ENCODE measurements at regions of chr18 and their contacts with region 1.

Region 1: DNA sequence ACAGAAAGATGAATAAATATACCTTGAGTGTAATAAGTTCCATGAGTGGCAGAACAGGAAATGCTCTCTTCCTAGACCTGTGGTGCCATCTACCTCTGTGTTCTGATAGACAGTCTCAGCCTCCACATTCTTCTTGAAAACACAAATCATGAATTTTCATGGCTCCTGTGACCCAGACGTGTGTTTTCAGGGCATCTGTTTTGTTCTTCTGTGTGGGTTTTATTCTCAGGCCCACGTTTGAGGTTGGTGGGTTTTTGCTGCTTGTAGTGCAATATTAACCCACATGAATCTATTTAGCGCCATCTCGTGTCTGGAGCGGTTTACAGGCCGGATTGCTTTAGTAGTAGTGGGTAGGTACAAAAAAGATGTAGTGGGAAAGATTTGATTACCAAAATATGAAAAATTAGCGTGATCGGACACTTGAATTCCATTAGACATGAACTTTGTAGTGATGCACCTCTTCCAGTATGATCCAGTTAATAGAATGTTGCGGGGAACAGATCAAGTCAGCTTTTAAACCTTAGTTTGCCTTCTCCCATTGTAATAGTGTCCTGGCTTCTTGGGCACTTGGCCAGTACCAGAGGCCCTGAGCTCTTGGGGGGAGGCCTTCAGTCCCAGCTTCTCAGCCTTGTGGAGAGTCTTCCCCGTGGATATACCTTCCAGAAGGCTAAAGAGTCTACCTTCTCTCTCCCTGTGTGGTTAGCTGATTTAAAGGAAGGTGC is 256.5 kb downstream of the TPGS2 start:
- DNase-seq: peak; percentile 69
- H3K4me3 Mint-ChIP-seq: no peak overlapping the region
- H3K27ac Mint-ChIP-seq: no peak overlapping the region
- H3K4me1 Mint-ChIP-seq: peaks cover 9% of the 10 kb centered on the region
- H3K27me3 Mint-ChIP-seq: no peaks in the 10 kb centered on the region
- CTCF ChIP-seq: peak; percentile 70

Region 2: GRCh38 chr18:36284671-36285295 is 287.5 kb before region 1 on chr18:
- CTCF ChIA-PET with region 1: interaction called, 21 read pairs
- POLR2A ChIA-PET with region 1: no interaction called
- intact Hi-C with region 1: loop called (anchors 5 kb)
- DNase-seq: peak; percentile 75
- H3K4me3 Mint-ChIP-seq: no peak overlapping the region
- H3K27ac Mint-ChIP-seq: no peak overlapping the region
- H3K4me1 Mint-ChIP-seq: no peaks in the 10 kb centered on the region
- H3K27me3 Mint-ChIP-seq: no peaks in the 10 kb centered on the region
- CTCF ChIP-seq: peak; percentile 67

Region 3: GRCh38 chr18:36302676-36303075 is 269.6 kb before region 1 on chr18:
- CTCF ChIA-PET with region 1: interaction called, 19 read pairs
- POLR2A ChIA-PET with region 1: interaction called, 4 read pairs
- intact Hi-C with region 1: no loop called
- DNase-seq: no peak
- H3K4me3 Mint-ChIP-seq: no peak overlapping the region
- H3K27ac Mint-ChIP-seq: no peak overlapping the region
- H3K4me1 Mint-ChIP-seq: peaks cover 31% of the 10 kb centered on the region
- H3K27me3 Mint-ChIP-seq: no peaks in the 10 kb centered on the region
- CTCF ChIP-seq: no peak

Region 4: DNA sequence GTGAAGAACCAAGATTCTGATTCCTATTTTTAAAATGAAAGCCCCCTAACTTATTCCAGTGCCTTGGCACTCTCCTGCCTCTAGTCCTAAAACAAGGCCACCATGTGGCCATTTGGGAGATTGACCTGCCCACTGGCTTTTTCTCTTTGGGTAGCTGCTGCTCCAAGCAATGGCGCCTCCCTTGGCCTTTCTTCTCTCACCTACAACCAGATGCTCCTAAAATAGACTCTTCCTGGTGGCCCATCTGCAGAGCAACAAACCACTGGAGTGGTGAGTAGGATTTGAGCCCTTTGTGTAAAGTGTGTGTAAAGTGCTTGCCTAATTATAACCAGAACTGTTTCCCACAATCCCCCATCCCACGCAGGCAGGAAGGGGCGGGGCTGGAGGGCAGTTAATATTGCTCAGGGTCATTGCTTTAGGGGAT is 160.5 kb before region 1 on chr18:
- CTCF ChIA-PET with region 1: interaction called, 4 read pairs
- POLR2A ChIA-PET with region 1: no interaction called
- intact Hi-C with region 1: loop called (anchors 2 kb)
- DNase-seq: peak; percentile 60
- H3K4me3 Mint-ChIP-seq: no peak overlapping the region
- H3K27ac Mint-ChIP-seq: no peak overlapping the region
- H3K4me1 Mint-ChIP-seq: peaks cover 9% of the 10 kb centered on the region
- H3K27me3 Mint-ChIP-seq: no peaks in the 10 kb centered on the region
- CTCF ChIP-seq: peak; percentile 35

Region 5: GRCh38 chr18:36519358-36519757 is 52.9 kb before region 1 on chr18:
- CTCF ChIA-PET with region 1: no interaction called
- POLR2A ChIA-PET with region 1: no interaction called
- intact Hi-C with region 1: no loop called
- DNase-seq: peak; percentile 15
- H3K4me3 Mint-ChIP-seq: no peak overlapping the region
- H3K27ac Mint-ChIP-seq: no peak overlapping the region
- H3K4me1 Mint-ChIP-seq: no peaks in the 10 kb centered on the region
- H3K27me3 Mint-ChIP-seq: no peaks in the 10 kb centered on the region
- CTCF ChIP-seq: no peak

Region 6: DNA sequence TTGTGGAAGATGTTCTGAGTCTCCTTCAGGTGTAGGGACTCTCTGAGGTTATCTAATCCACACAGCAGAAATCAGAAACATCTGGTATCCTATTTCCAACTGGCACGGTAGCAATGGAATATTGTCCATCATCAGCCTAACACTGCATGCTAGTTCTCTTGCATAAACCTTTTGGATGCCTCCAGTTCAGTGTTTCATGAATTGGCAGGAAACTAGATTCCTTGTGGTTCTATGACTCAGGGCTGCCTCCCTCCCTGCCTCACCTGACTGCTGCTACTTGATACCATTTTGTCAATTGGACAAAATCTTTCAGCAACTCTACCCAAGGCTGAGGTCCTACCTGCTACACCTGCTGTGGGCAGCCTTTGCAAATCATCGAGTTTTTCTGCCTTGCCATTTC is 125.6 kb after region 1 on chr18:
- CTCF ChIA-PET with region 1: no interaction called
- POLR2A ChIA-PET with region 1: no interaction called
- intact Hi-C with region 1: no loop called
- DNase-seq: peak; percentile 93
- H3K4me3 Mint-ChIP-seq: no peak overlapping the region
- H3K27ac Mint-ChIP-seq: peak overlapping the region; percentile 16
- H3K4me1 Mint-ChIP-seq: peaks cover 8% of the 10 kb centered on the region
- H3K27me3 Mint-ChIP-seq: no peaks in the 10 kb centered on the region
- CTCF ChIP-seq: no peak

Measured in MCF 10A (cell line).